ENCODE measurements at regions of chr10 and their contacts with region 1.

Region 1: DNA sequence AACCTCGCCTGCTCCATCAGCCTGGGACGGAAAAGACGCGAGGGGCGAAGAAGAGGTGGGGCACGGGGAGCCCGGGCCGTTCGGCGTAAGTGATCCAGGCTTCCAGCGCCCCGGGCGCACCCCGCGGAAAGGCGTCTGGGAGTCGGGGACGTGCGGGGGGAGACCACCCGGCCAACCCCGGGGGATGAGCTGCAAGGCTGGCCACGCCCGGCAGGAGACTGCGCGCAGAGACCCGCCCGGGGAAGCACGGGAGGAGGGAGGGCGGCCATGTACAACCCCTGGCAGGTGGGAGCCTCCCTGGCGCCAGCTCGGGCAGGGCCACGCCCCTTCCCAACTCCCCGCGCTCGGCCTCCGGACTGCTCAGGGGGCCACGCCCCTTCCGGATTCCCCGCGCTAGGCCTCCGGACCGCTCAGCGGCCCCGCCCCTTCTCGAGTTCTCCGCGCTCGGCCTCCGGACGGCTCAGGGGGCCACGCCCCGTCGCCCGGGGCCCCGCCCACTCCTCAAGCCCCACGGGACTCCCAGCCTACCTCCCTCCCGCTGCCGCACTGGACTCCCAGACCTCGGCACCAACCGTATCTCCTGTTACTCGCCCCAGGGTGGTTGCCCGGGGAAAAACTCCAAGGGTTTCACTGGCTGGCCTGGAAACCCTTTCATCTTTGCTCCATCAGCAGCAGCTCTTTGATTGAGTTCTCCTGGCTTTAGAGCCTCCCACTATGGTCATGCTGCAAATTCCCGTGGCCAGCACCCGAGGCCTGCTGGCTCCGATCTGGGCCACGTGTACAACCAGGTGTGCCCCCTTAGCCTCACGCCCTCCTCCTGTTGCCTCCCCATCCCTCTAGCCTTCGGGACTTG is 284.4 kb downstream of the ZEB1 start:
- DNase-seq: peak; percentile 98

Region 2: GRCh38 chr10:31288962-31289361 is 314.5 kb before region 1 on chr10:
- intact Hi-C with region 1: no loop called
- DNase-seq: no peak

Region 3: GRCh38 chr10:31697271-31698180 is 94.1 kb after region 1 on chr10:
- intact Hi-C with region 1: loop called (anchors 1 kb)
- DNase-seq: peak; percentile 91

Region 4: GRCh38 chr10:31759799-31760626 is 156.6 kb after region 1 on chr10:
- intact Hi-C with region 1: loop called (anchors 5 kb)
- DNase-seq: peak; percentile 98

Region 5: DNA sequence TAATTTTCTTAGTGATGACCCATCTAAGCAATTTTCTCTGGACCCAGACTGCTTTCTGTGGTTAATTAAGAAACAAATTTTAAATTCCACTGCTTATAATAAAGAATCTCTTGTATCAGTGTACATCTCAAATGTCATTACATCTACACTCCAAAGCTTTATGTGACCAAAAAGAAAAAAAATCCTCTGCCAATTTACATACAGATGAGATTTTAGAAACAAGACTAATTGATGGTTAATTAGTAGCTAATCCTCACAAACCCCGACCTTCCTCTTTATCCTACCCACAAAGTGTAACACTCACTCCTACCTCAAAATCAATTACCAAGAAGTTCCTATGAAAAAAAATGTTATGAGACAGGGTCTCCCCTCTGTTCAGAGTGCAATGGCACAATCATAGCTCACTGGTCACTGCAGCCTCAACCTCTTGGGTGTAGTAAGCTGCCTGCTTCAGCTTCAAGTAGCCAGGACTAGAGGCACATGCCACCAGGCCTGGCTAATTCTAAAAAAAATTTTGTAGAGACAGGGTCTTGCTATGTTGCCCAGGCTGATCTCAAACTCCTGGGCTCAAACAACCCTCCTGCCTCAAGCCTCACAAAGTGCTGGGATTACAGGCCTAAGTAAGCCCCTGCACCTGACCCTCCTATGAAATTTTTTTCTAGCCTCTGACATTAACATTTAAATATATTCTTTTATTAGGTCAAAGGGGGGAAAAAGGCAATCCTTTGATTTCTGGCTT is 438.0 kb after region 1 on chr10:
- intact Hi-C with region 1: no loop called
- DNase-seq: no peak

Measured in cardiac septum (tissue), 1 donor.